GM10248 (cell line): ENCODE measurements at regions of chr19 and their contacts with region 1.

Region 1: DNA sequence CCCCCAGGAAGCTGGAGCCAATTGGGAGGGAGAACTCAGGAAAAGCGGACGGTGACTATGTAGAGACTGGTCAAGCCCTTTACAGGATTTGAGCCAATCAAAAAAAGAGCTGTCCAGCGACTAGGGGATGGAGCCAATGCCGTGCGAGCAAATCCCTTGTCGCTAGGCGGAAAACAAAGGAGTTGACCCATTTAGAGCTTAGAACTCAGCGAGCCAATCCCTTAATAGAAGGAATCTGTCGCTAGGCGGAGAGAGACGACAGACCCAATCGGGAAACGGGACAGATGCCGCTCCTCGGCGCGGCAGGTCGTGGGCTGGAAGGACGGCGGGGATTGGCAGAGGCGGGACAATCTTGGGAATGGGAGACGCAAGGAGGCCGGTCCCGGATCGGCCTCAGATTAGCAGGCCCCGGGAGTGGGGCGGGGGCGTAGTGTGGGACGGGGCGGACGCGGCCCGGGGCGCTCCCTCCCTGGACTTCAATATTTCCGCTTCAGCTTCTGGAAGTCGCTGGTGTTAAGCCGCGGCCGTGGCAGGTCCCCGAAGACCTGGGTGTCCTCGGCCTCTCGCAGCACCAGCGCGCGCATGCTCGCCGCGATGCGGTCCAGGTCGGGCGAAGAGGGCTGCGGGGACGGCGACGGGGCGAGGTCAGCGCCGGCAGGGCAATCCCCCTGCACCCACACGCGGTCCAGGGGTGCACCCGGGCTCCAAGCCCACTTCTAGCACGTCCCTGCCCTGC is 2.2 kb upstream of the PNKP start:
- DNase-seq: peak; percentile 89
- CTCF ChIP-seq: no peak

Region 2: GRCh38 chr19:49766007-49766937 is 103.3 kb before region 1 on chr19:
- CTCF ChIA-PET with region 1: no interaction called
- POLR2A ChIA-PET with region 1: no interaction called
- DNase-seq: peak; percentile 100
- CTCF ChIP-seq: no peak

Region 3: GRCh38 chr19:49812997-49813861 is 56.4 kb before region 1 on chr19 and contains the start of gene FUZ:
- CTCF ChIA-PET with region 1: no interaction called
- POLR2A ChIA-PET with region 1: no interaction called
- DNase-seq: peak; percentile 92
- CTCF ChIP-seq: no peak

Region 4: DNA sequence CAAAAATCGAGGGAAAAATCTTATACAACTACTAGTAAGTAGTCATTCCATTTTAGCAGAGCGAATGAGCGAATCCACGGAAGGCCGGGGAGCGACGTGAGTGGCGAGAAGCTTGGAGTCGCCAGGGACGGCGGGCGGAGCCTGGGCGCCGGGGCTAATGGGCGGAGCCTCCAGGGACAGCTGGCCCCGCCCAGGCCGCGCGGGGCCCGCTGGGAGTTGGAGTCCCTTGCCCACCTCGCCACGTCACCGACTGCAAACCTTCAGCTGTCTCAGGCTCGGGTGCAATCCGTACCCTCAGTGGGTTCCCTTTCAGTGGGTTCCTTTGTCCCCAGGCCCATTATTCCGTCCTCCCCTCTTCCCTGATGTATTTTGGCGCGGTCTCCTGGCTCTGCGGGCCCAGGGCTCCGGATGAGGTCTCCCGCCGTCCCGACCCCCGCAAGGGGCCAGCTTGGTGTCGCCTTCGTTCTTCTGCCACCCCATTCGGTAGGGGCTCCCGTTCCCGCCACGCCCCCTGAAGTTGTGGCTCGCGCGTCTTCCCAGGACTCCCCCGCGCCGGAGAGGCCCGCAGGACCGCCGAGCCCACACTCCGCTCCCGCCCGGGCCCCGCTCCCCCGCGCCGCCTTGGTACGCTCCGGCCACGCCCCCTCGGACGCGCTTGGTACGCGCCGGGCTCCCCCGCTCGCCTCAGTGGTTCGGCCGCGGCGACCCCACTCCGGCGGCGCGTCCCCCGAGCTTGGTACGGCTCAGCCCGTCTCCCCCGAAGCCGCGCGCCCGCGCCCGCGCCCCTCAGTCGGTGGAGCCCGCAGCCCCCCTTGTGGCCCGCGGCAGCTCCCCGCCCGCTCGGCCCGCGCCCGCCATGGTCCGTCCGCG is 18.9 kb before region 1 on chr19 and contains the start of gene PTOV1:
- CTCF ChIA-PET with region 1: interaction called, 4 read pairs
- POLR2A ChIA-PET with region 1: interaction called, 11 read pairs
- DNase-seq: peak; percentile 98
- CTCF ChIP-seq: no peak